ENCODE measurements at regions of chr7 and their contacts with region 1.

Region 1: GRCh38 chr7:97117372-97118188 is at the start of gene SDHAF3:
- DNase-seq: peak; percentile 96 to 99 (median 98)
- ATAC-seq: peak; percentile 90 to 93
- H3K4me3 Mint-ChIP-seq: peak within 1 kb of the TSS; percentile 94 to 97 (median 96)
- H3K27ac Mint-ChIP-seq: peak within 1 kb of the TSS; percentile 94 to 98 (median 96)
- H3K4me1 Mint-ChIP-seq: peaks cover 24 to 59% (median 47%) of the 10 kb centered on the region in 4 donors
- H3K27me3 Mint-ChIP-seq: no peaks in the 10 kb centered on the region
- polyA plus RNA-seq, gene SDHAF3: 51.6 to 70.9 (median 59.4) TPM

Region 2: GRCh38 chr7:97872025-97872669 is 754.6 kb after region 1 on chr7 and contains the start of gene ASNS:
- POLR2A ChIA-PET with region 1: interaction called, 13 read pairs
- DNase-seq: peak; percentile 63 to 86 (median 78)
- ATAC-seq: peak; percentile 86 to 87
- H3K4me3 Mint-ChIP-seq: peak within 1 kb of the TSS; percentile 85 to 91 (median 87)
- H3K27ac Mint-ChIP-seq: peak within 1 kb of the TSS; percentile 75 to 95 (median 92)
- H3K4me1 Mint-ChIP-seq: peaks cover 7 to 20% (median 15%) of the 10 kb centered on the region in 4 donors
- H3K27me3 Mint-ChIP-seq: no peaks in the 10 kb centered on the region
- polyA plus RNA-seq, gene ASNS: 18.0 to 26.7 (median 20.3) TPM